Tibial artery (tissue), 4 donors: ENCODE measurements at regions of chr2 and their contacts with region 1.

Region 1: DNA sequence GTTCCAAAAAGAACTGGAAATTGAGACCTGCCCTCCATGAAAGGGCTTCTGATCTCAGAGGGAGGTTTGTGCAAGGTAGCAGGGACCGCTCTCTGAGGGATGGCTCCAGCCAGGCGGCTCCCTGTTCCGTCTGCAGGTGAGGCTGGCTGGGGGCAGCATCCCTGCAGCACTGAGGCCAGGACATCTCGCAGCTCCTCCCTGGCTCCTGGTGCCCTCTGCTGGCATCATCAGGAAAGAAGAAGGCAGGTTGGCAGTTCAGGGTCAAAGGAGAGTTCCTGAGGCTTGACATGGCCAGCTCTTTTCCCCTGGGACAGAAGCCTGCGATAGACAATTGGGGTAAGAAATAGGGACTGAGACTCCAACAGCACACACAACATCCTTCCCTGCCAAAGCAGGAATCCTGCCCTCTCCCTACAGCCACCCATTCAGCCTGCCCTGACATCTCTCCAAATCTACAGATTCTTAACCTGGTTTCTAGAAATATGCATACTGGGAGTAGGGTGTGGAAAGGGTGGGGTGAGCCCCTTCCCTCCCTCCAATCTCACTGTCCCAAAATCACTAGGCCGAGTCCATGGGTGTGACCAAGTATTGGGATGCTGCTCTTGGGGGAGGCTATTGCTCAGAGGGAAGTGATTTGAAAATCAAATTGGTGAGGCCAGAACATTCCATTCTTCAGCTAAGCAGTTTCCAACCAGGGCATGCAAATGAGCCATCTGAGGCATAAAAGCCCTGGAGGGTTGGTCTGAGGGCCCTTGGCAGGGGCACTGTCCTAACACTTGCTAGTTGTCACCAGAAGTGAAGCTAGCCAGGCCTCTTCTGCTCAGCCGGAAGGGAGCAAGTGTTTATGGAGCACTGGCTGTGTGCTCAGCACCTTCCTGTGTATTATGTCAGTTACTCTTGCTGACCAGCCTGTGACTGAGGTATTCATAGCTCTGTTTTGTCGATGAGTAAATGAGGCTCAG is 185.4 kb downstream of the TFCP2L1 start:
- DNase-seq: no peak
- H3K4me3 ChIP-seq: no peak overlapping the region
- H3K27ac ChIP-seq: no peak overlapping the region
- H3K4me1 ChIP-seq: no peaks in the 10 kb centered on the region
- H3K27me3 ChIP-seq: peaks cover 0 to 38% of the 10 kb centered on the region in 2 donors
- CTCF ChIP-seq: peak in 1 of 2 experiments; percentile 6

Region 2: DNA sequence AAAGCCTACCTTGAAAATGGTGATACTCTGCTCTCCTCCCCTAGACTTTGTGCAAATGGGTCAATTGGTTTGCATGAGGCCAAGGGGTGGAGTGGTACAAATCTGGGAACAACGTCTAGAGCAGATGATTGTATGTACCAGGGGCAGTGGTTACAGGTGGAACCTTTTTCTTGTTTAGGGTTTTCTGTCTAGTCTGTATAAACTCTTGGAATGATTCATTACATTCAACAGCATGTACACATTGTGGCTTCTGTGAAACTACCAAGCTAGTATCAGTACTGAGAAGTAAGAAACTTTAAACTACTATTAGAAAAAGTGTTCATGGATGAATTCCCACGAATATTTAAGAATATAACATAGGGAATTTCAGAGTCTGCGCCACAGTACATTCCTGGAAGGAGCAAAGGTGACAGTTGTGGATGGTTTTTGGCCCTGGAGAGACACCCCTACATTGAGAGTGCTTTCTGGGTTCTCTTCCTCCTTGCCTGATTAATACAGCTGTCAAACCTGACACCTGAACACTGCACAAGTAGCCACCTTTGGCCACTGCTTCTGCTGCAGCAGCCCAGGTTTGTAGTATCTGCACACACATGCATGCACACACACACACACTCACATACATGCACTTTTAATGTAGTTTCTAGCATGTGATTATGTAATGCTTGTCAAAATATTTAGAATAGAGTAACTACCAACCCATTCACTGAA is 1525.3 kb before region 1 on chr2:
- intact Hi-C with region 1: loop called (anchors 10 kb)
- DNase-seq: no peak
- H3K4me3 ChIP-seq: no peak overlapping the region
- H3K27ac ChIP-seq: no peak overlapping the region
- H3K4me1 ChIP-seq: peaks cover 0 to under 1% (median 0%) of the 10 kb centered on the region in 4 donors
- H3K27me3 ChIP-seq: no peaks in the 10 kb centered on the region
- CTCF ChIP-seq: no peak